H1 (cell line): ENCODE measurements at regions of chr9 and their contacts with region 1.

Region 1: DNA sequence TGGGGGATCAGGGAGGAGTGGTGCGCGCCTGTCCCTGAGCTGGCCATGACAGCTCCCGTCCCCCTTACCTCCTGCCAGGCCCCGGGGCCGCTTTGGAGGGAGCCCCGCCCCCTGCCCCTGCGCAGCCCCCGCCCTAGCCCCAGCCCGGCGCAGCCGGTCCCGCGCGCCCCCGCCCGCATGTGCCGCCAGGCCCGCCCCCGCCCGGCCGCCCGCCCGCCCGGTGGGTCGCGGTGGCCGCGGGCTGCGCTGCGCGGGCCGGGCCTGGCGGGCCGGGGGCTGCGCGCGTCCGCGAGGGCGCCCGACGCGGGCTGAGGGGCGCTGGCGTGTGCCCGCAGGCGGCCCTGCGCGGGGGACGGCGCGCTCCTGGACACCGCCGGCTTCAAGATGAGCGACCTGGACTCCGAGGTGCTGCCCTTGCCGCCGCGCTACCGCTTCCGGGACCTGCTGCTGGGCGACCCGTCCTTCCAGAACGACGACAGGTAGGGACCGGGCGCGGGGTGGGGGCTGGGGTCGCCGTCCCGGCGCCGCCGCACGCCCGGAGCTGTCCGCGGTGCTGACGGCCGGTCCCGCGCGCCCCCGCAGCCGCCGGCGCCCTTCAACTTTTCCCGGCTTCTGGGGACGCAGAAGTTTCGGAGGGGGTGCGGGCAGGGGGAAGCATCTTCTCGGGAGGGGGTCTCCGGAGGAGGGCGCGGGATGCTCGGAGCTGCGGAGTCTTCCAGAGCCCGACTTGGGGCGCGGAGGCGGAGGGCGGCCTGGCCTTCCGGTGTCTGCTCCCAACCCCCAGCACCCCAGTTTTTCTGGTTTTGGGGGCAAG is 12.5 kb downstream of the KCNT1 start:
- DNase-seq: peak in 1 of 2 experiments; percentile 84
- H3K4me3 ChIP-seq: peak overlapping the region; percentile 41 to 52 (median 47); a peak in 6 of 8 replicates
- H3K27ac ChIP-seq: no peak overlapping the region
- H3K4me1 ChIP-seq: peaks cover 0 to 3% (median 1%) of the 10 kb centered on the region in 4 experiments; a peak in 2 of 7 replicates
- H3K27me3 ChIP-seq: peaks cover 0 to 25% (median 21%) of the 10 kb centered on the region in 4 experiments; a peak in 6 of 7 replicates
- CTCF ChIP-seq: no peak
- EP300 ChIP-seq: no peak
- POLR2A ChIP-seq: no peak
- RAD21 ChIP-seq: no peak

Region 2: GRCh38 chr9:135662758-135663450 is 51.5 kb before region 1 on chr9 and contains the start of gene LCN9:
- CTCF ChIA-PET with region 1: no interaction called
- POLR2A ChIA-PET with region 1: no interaction called
- DNase-seq: peak in 1 of 2 experiments; percentile 43
- H3K4me3 ChIP-seq: no peak within 1 kb of the TSS
- H3K27ac ChIP-seq: no peak within 1 kb of the TSS
- H3K4me1 ChIP-seq: peaks cover 0 to 8% (median 4%) of the 10 kb centered on the region in 4 experiments; a peak in 3 of 7 replicates
- H3K27me3 ChIP-seq: no peaks in the 10 kb centered on the region; a peak in 1 of 7 replicates
- CTCF ChIP-seq: no peak
- EP300 ChIP-seq: no peak
- POLR2A ChIP-seq: no peak
- RAD21 ChIP-seq: no peak
- total RNA-seq, gene LCN9: 3.1 and 3.7 TPM in 2 replicates

Region 3: DNA sequence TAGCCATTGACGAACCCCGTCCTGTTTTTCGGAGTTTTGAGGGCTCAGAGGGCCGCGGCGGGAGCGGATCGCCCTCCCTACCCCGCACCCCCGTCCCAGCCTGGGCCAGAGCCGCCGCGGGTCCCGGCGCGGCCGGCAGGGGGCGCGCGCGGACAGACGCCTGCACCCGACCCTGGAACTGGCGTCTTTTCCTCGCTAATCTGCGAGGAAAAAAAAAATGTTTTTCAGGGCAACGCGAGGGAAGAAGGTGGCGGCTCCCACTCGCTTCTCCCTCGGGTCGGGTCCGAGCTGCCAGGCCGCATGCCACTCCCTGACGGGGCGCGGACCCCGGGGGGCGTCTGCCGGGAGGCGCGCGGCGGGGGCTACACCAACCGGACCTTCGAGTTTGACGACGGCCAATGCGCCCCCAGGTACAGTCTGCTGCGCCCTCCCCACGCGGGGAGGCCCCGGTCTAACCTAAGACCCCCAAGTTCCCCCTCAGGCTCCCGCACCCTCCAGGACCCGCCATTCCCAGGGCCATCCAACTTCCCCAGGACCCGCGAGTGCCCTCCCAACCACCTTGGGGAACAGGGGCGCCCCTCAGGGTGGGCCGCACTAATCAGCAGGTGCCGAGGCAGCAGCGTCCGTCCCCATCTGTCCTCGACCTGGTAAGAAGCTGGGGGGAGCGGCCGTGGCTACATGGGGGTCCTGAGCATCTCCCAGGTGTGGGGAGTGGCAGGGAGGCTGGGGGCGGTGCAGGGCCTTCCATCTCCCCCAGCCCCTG is 12.3 kb before region 1 on chr9 and contains the start of gene KCNT1:
- CTCF ChIA-PET with region 1: interaction called, 21 read pairs
- POLR2A ChIA-PET with region 1: interaction called, 7 read pairs
- DNase-seq: peak in 1 of 2 experiments; percentile 96
- H3K4me3 ChIP-seq: peak within 1 kb of the TSS; percentile 30 to 62 (median 34); a peak in 6 of 8 replicates
- H3K27ac ChIP-seq: no peak within 1 kb of the TSS
- H3K4me1 ChIP-seq: peaks cover 0 to 15% (median under 1%) of the 10 kb centered on the region in 4 experiments; a peak in 2 of 7 replicates
- H3K27me3 ChIP-seq: peaks cover 0 to 14% (median 4%) of the 10 kb centered on the region in 4 experiments; a peak in 4 of 7 replicates
- CTCF ChIP-seq: peak in 2 of 3 experiments; percentile 77 to 85; a peak in 3 of 4 replicates
- EP300 ChIP-seq: no peak
- POLR2A ChIP-seq: no peak
- RAD21 ChIP-seq: peak; percentile 52 to 74
- total RNA-seq, gene KCNT1: 0.13 and 0.44 TPM in 2 replicates